ENCODE measurements at regions of chr1 and their contacts with region 1.

Region 1: DNA sequence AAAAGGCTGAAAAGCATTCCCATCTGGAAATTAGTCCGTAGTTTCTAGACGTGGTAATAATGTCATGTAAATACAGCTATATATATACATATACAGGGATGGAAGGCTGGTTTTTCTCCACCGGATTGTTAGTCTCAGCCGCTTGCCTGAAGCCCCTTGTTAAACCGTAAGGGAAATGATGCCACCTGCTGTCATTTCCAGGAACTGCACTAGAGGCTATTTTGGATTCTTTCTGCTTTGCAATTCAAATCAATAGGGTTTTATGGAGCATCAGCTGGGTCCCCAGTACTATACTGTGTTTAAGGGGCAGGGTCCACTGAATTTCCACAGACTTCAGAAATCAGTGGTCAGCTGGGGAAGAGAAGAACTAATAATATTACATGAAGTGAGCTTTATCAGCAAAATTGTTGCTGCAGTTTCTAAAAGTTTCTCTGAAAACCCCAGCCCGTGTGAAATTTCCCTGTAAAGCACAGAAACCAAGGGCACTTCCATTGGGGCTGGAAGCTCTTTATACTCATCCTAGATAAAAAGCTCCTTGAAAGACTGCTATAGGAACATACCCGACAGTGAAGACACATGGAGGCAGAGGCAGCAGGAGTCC is 33.8 kb upstream of the MPZL1 start:
- DNase-seq: peak; percentile 63 to 89
- ATAC-seq: peak; percentile 77 to 96 (median 83)
- H3K4me3 ChIP-seq: no peak overlapping the region
- H3K4me3 Mint-ChIP-seq: no peak overlapping the region
- H3K27ac ChIP-seq: no peak overlapping the region
- H3K27ac Mint-ChIP-seq: peak overlapping the region in 1 of 2 donors; percentile 67
- H3K4me1 ChIP-seq: peaks cover 9% of the 10 kb centered on the region
- H3K4me1 Mint-ChIP-seq: peaks cover 23 to 31% of the 10 kb centered on the region in 2 donors
- H3K27me3 ChIP-seq: no peaks in the 10 kb centered on the region
- H3K27me3 Mint-ChIP-seq: no peaks in the 10 kb centered on the region
- CTCF ChIP-seq: peak; percentile 91

Region 2: DNA sequence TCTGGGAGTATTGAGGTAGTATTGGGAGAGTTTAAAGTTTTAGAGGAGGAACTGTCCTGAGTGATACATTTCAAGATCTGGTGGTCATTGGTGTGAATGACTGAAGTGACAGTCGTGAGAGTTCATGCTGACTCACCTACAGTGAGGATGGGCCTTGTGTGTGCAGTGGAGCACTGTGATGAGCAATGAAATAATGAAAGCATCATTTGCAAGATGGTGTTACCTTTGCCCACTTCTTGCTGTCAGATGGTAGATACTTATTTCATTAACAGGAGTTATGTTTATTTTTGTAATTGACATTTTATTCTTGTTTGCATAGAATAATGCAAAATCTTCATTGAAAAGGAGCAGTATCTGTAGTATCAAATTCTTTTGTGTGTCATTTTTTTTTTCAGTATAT is 438.3 kb before region 1 on chr1:
- intact Hi-C with region 1: loop called (anchors 10 kb)
- DNase-seq: no peak
- ATAC-seq: peak; percentile 55 to 72 (median 59)
- H3K4me3 ChIP-seq: no peak overlapping the region
- H3K4me3 Mint-ChIP-seq: no peak overlapping the region
- H3K27ac ChIP-seq: no peak overlapping the region
- H3K27ac Mint-ChIP-seq: peak overlapping the region in 1 of 2 donors; percentile 1
- H3K4me1 ChIP-seq: no peaks in the 10 kb centered on the region
- H3K4me1 Mint-ChIP-seq: peaks cover 20 to 23% of the 10 kb centered on the region in 2 donors
- H3K27me3 ChIP-seq: no peaks in the 10 kb centered on the region
- H3K27me3 Mint-ChIP-seq: no peaks in the 10 kb centered on the region
- CTCF ChIP-seq: no peak

Region 3: DNA sequence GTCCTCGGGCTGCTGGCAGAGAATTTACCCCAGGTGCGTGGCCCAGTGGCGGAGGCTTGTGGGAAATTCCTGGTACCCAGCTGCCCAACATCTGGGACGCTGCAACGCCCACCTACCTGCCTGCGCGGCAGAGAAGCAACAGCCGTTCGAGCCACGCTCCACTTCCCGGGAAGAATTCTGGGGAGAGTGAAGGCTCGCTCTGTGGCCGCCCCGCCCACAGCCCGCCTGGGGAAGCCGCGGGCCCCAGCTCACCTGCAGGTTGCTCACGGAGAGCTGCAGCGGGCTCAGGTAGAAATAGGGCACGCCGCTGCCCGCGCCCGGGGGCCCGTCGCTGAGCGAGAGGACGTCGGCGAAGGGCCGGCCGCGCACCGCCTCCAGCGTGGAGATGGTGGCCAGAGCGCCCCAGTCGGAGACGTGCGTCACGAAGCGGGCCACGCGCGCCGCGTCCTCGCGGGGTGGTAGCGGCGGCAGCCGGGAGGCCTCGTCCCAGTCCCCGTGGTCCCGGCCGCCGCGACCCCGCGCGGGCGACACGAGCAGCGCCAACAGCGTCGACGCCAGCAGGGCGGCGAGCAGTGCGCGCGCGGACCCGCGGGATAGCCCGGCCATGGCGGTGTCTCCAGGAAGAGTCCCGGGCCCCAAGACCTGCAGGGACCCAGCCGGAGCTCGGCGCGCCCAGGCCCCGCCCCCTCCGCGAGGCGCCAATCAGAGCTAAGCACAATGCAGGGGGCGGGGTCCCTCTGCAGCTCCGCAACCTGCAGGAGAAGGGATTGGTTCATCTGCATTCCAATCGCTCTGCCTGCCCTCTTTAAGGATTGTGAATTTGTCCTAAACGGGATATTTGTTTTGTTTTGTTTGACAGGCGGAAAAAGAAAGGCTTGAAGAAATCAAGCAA is 134.6 kb before region 1 on chr1 and contains the start of gene CREG1:
- intact Hi-C with region 1: loop called (anchors 1 kb)
- DNase-seq: peak; percentile 87 to 94
- ATAC-seq: peak; percentile 97 to 99 (median 97)
- H3K4me3 ChIP-seq: peak within 1 kb of the TSS; percentile 58
- H3K4me3 Mint-ChIP-seq: peak within 1 kb of the TSS; percentile 92
- H3K27ac ChIP-seq: no peak within 1 kb of the TSS
- H3K27ac Mint-ChIP-seq: peak within 1 kb of the TSS; percentile 43 to 70
- H3K4me1 ChIP-seq: peaks cover 20% of the 10 kb centered on the region
- H3K4me1 Mint-ChIP-seq: peaks cover 12 to 20% of the 10 kb centered on the region in 2 donors
- H3K27me3 ChIP-seq: no peaks in the 10 kb centered on the region
- H3K27me3 Mint-ChIP-seq: peaks cover 0 to 9% of the 10 kb centered on the region in 2 donors
- CTCF ChIP-seq: no peak
- total RNA-seq, gene CREG1: 6.7 to 15.8 (median 8.9) TPM